ENCODE measurements at regions of chr5 and their contacts with region 1.

Region 1: DNA sequence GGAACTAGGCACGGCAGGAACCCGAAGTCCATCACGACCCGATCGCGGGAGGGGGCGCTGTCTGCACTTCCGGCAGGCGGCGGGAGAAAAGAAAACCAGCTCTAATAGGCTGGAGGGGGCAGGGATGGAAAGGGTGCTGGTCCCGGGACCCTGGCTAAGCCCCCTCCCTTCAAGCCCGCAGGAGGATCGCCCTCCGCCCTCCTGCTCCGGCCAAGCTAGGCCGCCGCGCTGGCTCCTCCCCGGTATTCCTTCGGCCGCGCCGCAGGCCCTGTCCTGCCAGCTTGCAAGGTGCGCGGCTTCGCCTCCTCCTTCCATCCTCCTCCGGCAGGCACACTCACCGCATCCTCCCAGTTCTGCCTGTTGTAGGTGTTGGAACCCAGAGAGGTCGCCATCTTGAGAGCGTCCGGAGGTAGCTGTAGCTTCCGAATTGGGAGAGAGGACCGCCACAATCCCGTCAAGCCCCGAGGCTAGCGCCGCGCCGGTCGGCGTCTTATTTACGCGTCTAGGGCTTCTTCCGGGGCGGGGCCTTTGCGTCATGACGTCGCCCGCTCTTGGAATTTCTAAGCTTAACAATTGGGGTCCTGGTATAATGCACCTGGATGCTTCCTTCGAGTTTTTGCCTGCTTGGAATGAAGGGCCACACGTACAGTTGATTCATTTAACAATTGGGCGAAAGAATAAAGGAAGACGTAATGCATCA is at the start of gene RBM22:
- DNase-seq: peak; percentile 48
- H3K4me3 ChIP-seq: peak within 1 kb of the TSS; percentile 83
- H3K27me3 ChIP-seq: no peaks in the 10 kb centered on the region
- CTCF ChIP-seq: peak; percentile 76
- polyA plus RNA-seq, gene RBM22: 31.4 and 45.2 TPM in 2 replicates

Region 2: DNA sequence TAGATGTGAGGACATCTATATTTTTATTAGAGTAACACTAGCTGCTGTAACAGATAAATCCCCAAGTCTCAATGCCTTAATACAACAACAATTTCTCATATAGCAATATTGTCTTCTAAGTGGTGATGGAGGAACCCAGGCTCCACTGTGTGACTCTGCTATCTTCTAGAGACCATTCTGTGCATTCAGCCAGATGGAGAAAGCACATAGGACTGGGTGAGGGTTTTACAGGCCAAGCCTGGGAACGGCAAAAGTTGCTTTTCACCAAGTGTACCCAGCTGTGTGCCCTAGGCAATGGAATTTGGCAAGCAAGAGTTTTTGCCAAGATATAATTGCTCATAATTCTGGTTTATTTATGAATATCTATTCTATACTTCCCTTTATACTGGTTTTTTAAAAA is 11.6 kb before region 1 on chr5:
- CTCF ChIA-PET with region 1: interaction called, 21 read pairs
- POLR2A ChIA-PET with region 1: no interaction called
- DNase-seq: no peak
- H3K4me3 ChIP-seq: no peak overlapping the region
- H3K27me3 ChIP-seq: no peaks in the 10 kb centered on the region
- CTCF ChIP-seq: no peak